ENCODE measurements at regions of chr7 and their contacts with region 1.

Region 1: DNA sequence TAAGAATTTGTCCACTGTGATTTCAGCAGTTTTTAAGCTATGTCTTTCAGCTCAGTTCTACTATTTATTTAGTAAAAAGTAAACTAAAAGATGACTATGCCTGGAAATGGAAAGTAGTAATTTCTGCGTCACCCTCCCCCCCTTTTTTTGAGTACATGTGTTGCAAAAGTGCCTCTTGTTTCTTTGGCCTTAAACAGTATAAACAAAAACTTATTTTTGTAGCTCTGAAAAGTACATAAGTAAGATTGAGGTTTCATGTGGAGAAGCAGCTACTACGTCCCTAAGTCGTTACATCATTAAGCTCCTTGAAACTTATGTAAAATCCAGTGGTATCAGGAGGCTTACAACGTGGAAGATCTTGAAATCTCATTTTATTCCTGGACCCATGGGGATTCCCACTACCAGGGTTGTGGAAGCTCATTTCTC is 46.3 kb upstream of the HBP1 start:
- DNase-seq: no peak
- ATAC-seq: no peak
- H3K4me3 ChIP-seq: no peak overlapping the region
- H3K4me3 Mint-ChIP-seq: no peak overlapping the region
- H3K27ac ChIP-seq: no peak overlapping the region
- H3K27ac Mint-ChIP-seq: no peak overlapping the region
- H3K4me1 ChIP-seq: peaks cover 15% of the 10 kb centered on the region
- H3K4me1 Mint-ChIP-seq: peaks cover 21% of the 10 kb centered on the region
- H3K27me3 ChIP-seq: no peaks in the 10 kb centered on the region
- H3K27me3 Mint-ChIP-seq: no peaks in the 10 kb centered on the region
- CTCF ChIP-seq: no peak

Region 2: DNA sequence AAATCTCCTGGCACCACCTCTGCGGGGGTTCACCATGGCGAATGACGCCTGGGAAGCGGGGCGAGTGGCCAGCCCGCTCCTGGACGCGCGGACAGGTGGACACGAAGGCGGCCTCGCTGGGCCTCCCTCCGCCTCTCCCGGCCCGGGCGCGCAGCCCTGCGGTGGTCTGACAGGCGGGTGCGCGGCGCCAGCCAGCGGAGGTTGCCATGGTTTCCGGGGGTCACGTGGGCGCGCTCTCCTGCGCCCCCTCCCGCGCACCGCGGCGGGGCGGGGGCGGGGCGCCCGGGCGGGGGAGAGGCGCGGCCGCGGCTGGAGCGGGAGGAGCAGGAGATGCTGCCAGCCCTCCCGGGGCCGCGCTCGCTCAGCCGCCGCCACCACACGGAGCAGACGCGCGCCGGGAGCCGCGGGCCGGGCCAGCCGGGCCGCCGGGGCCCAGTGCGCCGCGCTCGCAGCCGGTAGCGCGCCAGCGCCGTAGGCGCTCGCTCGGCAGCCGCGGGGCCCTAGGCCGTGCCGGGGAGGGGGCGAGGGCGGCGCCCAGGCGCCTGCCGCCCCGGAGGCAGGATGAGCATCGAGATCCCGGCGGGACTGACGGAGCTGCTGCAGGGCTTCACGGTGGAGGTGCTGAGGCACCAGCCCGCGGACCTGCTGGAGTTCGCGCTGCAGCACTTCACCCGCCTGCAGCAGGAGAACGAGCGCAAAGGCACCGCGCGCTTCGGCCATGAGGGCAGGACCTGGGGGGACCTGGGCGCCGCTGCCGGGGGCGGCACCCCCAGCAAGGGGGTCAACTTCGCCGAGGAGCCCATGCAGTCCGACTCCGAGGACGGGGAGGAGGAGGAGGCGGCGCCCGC is 77.9 kb before region 1 on chr7 and contains the start of gene PRKAR2B:
- CTCF ChIA-PET with region 1: no interaction called
- POLR2A ChIA-PET with region 1: interaction called, 3 read pairs
- intact Hi-C with region 1: loop called in 1 of 2 experiments (anchors 10 kb)
- DNase-seq: peak; percentile 56 to 93 (median 71)
- ATAC-seq: peak; percentile 94
- H3K4me3 ChIP-seq: peak within 1 kb of the TSS; percentile 60
- H3K4me3 Mint-ChIP-seq: peak within 1 kb of the TSS; percentile 94
- H3K27ac ChIP-seq: no peak within 1 kb of the TSS
- H3K27ac Mint-ChIP-seq: peak within 1 kb of the TSS; percentile 39
- H3K4me1 ChIP-seq: peaks cover 10% of the 10 kb centered on the region
- H3K4me1 Mint-ChIP-seq: peaks cover 13% of the 10 kb centered on the region
- H3K27me3 ChIP-seq: peaks cover 12 to 30% of the 10 kb centered on the region in 2 experiments
- H3K27me3 Mint-ChIP-seq: peaks cover 43% of the 10 kb centered on the region
- CTCF ChIP-seq: no peak
- total RNA-seq, gene PRKAR2B: 0.41 to 0.42 TPM

Measured in CD4-positive, alpha-beta T cell (primary cell).